Activated CD4-positive, alpha-beta memory T cell treated with anti-CD3 and anti-CD28 coated beads for 36 hours (primary cell): ENCODE measurements at regions of chr6 and their contacts with region 1.

Region 1: GRCh38 chr6:95587989-95588388 is 10.7 kb downstream of the MANEA start:
- DNase-seq: no peak
- H3K4me3 Mint-ChIP-seq: no peak overlapping the region
- H3K27ac Mint-ChIP-seq: no peak overlapping the region
- H3K4me1 Mint-ChIP-seq: peaks cover 23% of the 10 kb centered on the region
- H3K27me3 Mint-ChIP-seq: no peaks in the 10 kb centered on the region

Region 2: DNA sequence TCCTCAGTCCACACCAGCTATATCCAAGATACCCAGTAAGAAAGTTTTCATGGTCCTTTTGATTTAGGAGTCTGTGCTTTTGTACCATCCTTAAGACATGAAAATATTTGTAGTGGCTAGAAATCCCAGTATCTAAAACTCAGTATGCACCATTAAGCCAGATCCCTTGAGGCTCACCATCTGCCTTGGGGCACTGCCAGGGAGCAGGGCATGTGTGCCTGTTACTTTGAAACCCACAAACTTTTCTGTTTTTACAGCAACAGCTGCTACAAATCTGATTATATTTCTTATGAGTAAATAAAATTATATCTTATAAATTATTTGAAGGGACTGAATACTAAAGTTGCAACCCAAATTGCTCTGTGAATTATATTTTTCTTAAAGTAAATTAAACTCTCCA is 301.1 kb before region 1 on chr6:
- CTCF ChIA-PET with region 1: no interaction called
- POLR2A ChIA-PET with region 1: no interaction called
- intact Hi-C with region 1: no loop called
- DNase-seq: no peak
- H3K4me3 Mint-ChIP-seq: no peak overlapping the region
- H3K27ac Mint-ChIP-seq: no peak overlapping the region
- H3K4me1 Mint-ChIP-seq: no peaks in the 10 kb centered on the region
- H3K27me3 Mint-ChIP-seq: no peaks in the 10 kb centered on the region

Region 3: DNA sequence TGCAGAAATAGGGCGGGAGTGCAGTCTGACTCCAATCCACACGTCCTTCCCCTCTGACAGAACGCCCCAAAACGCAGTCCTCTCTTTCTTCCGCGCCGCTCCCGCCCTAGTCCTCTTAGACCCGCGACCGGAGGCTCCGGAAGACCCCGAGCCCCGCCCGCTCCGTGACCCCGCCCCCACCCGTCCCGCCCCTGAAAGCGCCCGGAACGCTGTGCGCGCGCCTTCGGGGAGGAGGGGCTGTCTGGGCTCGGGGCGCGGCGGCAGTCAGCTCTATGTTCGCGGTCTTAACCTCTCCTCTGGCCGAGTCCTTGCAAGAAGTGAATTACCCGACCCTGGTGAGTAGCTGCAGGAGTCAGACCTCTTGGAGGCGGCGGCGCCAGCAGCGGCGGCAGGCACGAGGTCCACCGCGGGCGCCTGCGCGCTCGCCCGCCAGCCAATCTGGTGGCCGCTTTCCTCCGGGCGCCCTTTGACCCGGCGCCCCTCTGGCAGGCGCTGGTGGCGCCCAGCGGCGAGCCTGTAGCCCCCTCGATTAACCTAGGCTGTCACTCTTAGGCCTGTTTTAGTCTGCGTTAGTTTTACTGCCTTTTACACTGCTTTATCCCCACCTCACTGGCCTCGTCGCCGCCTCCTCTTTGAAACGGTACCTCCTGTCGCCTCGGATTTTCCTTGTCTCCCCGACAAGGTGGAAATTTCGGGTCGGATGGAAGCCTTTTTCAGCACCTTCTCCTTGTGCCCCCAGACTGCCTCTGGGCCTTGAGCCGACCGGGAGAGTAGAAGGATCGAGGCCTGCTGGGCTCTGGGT is 10.5 kb before region 1 on chr6 and contains the start of gene MANEA:
- CTCF ChIA-PET with region 1: no interaction called
- POLR2A ChIA-PET with region 1: no interaction called
- intact Hi-C with region 1: loop called (anchors 1 kb)
- DNase-seq: peak; percentile 85
- H3K4me3 Mint-ChIP-seq: peak within 1 kb of the TSS; percentile 90
- H3K27ac Mint-ChIP-seq: peak within 1 kb of the TSS; percentile 96
- H3K4me1 Mint-ChIP-seq: peaks cover 38% of the 10 kb centered on the region
- H3K27me3 Mint-ChIP-seq: no peaks in the 10 kb centered on the region
- total RNA-seq, gene MANEA: 16.3 to 18.7 TPM